ENCODE measurements at regions of chr3 and their contacts with region 1.

Region 1: DNA sequence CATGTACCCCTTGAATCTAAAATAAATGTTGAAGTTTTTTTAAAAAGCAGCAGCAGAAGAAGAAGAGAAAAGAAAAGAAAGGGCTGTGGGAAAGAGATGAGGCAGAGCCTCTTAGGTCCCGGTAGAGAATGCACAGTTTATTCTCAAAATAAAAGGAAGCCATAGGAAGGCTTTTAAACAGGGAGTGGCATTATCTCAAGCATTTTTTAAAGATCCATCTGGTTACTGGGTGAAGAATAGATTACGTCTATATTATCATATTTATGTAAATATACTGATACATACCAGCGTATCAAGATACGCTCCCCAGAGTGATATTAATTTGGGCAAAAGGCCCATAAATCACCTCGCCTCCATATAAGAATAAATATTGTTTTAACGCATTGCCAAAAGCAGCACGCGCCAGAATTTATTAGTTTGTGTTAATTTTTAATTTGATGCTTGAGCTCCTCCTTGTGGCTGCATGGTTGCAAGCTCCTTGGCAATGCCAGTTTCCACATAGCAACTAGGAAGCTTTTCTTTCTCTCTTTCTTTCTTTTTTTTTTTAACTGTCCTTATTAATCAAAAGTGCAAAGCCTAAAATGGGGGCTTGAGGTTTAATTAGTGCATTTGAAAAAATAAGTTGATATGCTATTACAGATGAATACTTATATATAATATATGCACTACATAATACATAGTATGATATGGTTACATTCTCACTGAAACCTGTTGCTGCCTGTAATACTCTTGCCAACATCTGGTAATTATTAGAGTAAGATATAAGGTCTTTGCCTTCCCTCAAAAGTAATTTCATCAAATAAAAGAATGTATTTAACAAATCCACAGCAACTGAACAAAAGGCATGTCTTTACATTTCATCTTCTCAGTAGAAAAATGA is 242.8 kb upstream of the UBE2E2 start:
- DNase-seq: peak; percentile 21
- H3K4me3 ChIP-seq: no peak overlapping the region
- H3K27ac ChIP-seq: no peak overlapping the region
- H3K4me1 ChIP-seq: no peaks in the 10 kb centered on the region
- H3K27me3 ChIP-seq: peaks cover 4% of the 10 kb centered on the region
- CTCF ChIP-seq: peak; percentile 71 to 75

Region 2: GRCh38 chr3:22089284-22089683 is 871.1 kb before region 1 on chr3:
- CTCF ChIA-PET with region 1: no interaction called
- dilution Hi-C with region 1: no loop called
- in situ Hi-C with region 1: no loop called
- intact Hi-C with region 1: loop called (anchors 5 kb)
- DNase-seq: peak; percentile 32
- H3K4me3 ChIP-seq: no peak overlapping the region
- H3K27ac ChIP-seq: no peak overlapping the region
- H3K4me1 ChIP-seq: no peaks in the 10 kb centered on the region
- H3K27me3 ChIP-seq: no peaks in the 10 kb centered on the region
- CTCF ChIP-seq: peak; percentile 58 to 63

Region 3: GRCh38 chr3:22175947-22176346 is 784.4 kb before region 1 on chr3:
- CTCF ChIA-PET with region 1: no interaction called
- dilution Hi-C with region 1: no loop called
- in situ Hi-C with region 1: no loop called
- intact Hi-C with region 1: loop called (anchors 2 kb)
- DNase-seq: no peak
- H3K4me3 ChIP-seq: no peak overlapping the region
- H3K27ac ChIP-seq: no peak overlapping the region
- H3K4me1 ChIP-seq: no peaks in the 10 kb centered on the region
- H3K27me3 ChIP-seq: no peaks in the 10 kb centered on the region
- CTCF ChIP-seq: no peak

Region 4: GRCh38 chr3:22565393-22565792 is 395.0 kb before region 1 on chr3:
- CTCF ChIA-PET with region 1: interaction called, 10 read pairs
- dilution Hi-C with region 1: no loop called
- in situ Hi-C with region 1: no loop called
- intact Hi-C with region 1: loop called (anchors 1 kb)
- DNase-seq: no peak
- H3K4me3 ChIP-seq: no peak overlapping the region
- H3K27ac ChIP-seq: no peak overlapping the region
- H3K4me1 ChIP-seq: peaks cover 4% of the 10 kb centered on the region
- H3K27me3 ChIP-seq: no peaks in the 10 kb centered on the region
- CTCF ChIP-seq: no peak

Region 5: GRCh38 chr3:22729985-22730384 is 230.4 kb before region 1 on chr3:
- CTCF ChIA-PET with region 1: no interaction called
- dilution Hi-C with region 1: no loop called
- in situ Hi-C with region 1: no loop called
- intact Hi-C with region 1: loop called (anchors 5 kb)
- DNase-seq: peak; percentile 2
- H3K4me3 ChIP-seq: no peak overlapping the region
- H3K27ac ChIP-seq: no peak overlapping the region
- H3K4me1 ChIP-seq: peaks cover 11% of the 10 kb centered on the region
- H3K27me3 ChIP-seq: no peaks in the 10 kb centered on the region
- CTCF ChIP-seq: peak; percentile 23 to 59

Region 6: GRCh38 chr3:22922317-22922716 is 38.0 kb before region 1 on chr3:
- CTCF ChIA-PET with region 1: no interaction called
- dilution Hi-C with region 1: no loop called
- in situ Hi-C with region 1: no loop called
- intact Hi-C with region 1: loop called (anchors 2 kb)
- DNase-seq: peak; percentile 5
- H3K4me3 ChIP-seq: no peak overlapping the region
- H3K27ac ChIP-seq: no peak overlapping the region
- H3K4me1 ChIP-seq: no peaks in the 10 kb centered on the region
- H3K27me3 ChIP-seq: peaks cover 4% of the 10 kb centered on the region
- CTCF ChIP-seq: peak; percentile 46 to 47

Region 7: DNA sequence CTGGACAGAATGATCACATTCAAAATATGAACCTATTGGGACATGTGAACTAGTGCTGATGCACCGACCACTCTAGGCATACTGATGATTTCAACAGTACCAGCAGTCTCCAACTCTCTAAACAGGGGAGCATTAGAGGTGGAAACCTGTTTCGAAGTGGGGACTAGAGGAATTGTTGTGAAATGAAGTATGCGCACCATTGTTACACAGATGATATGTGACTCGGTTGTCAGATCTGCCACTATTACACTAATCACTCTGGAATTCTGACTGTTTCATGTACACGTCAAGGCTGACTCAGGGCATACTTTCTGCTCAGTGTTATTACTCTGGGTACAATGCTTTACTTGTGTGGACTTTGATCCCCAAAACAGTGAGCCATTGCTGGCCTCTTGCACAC is 44.6 kb after region 1 on chr3:
- CTCF ChIA-PET with region 1: no interaction called
- dilution Hi-C with region 1: no loop called
- in situ Hi-C with region 1: no loop called
- intact Hi-C with region 1: no loop called
- DNase-seq: peak; percentile 93
- H3K4me3 ChIP-seq: no peak overlapping the region
- H3K27ac ChIP-seq: no peak overlapping the region
- H3K4me1 ChIP-seq: peaks cover 14% of the 10 kb centered on the region
- H3K27me3 ChIP-seq: no peaks in the 10 kb centered on the region
- CTCF ChIP-seq: no peak

Region 8: DNA sequence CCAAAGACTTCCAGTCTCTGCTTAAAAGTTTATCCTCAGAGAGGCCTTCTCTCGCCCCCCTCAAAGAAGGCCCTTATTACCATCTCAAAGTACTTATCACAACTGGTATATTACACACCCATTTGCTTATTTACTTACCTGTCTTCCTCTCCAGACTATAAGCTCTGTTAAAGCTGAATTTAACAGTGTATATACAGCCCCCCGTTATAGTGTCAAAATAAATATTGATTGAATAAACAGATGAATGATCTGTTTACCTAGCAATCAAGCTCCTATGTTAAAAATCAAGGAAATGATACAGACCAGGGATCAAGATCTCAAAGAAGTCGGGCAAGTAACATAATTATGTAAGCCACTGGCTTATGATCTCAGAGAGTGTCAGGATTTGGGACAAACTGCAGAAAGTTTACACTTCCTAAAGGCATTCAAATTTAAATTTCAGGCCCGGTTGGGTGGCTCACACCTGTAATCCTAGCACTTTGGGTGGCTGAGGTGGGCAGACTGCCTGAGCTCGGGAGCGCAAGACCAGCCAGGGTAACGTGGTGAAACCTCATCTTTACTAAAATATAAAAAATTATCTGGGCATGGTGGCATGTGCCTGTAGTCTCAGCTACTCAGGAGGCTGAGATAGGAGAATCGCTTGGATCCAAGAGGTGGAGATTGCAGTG is 118.3 kb after region 1 on chr3:
- CTCF ChIA-PET with region 1: interaction called, 19 read pairs
- dilution Hi-C with region 1: no loop called
- in situ Hi-C with region 1: no loop called
- intact Hi-C with region 1: no loop called
- DNase-seq: no peak
- H3K4me3 ChIP-seq: no peak overlapping the region
- H3K27ac ChIP-seq: no peak overlapping the region
- H3K4me1 ChIP-seq: peaks cover 5% of the 10 kb centered on the region
- H3K27me3 ChIP-seq: peaks cover 7% of the 10 kb centered on the region
- CTCF ChIP-seq: no peak